ENCODE measurements at regions of chr1 and their contacts with region 1.

Region 1: GRCh38 chr1:109790735-109791494 is 27.2 kb upstream of the EPS8L3 start:
- DNase-seq: no peak
- ATAC-seq: peak; percentile 41

Region 2: DNA sequence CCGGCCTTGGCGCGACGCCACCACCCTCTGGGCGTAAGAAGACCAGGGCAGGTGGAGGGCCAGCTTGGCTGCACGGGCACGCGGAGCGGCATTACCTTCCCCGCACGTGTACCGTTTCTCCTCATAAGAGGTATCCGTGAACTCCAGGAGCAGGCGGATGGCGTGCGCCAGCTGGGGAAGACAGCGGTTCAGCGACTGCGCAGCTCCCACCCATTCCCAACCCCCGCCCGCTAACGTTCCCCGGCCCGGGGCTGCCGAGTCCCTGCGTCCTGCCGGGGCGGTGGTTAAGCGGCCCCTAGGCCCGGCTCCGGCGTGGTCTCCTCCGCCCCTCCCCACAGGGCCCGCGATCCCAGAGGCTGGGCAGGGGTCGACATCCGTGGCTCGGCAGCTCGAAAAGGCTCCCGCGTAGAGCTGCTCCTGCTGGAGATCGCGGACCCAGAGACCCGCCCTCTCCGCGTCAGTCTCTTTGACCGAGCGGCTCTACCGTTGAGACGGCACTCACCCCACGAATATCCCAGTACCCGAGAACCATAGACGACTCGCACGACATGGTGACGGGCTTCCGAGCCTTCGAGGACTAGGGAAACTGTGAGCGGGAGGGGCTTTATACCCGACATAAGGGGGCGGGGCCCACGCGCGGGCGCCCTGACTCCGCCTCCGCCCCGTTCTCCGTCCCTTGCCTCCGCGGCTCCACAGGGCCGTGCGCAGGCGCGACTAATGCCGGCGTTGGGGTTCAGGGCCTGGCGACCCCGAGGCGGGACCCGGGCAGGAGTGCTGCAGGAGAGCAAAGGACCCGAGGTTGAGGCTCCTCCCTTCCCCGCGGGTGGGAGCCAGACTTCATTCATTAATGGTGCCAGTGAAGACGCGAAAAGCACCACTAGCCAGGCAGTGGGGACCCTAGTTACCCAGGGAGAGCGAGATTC is 50.9 kb before region 1 on chr1:
- intact Hi-C with region 1: no loop called
- DNase-seq: peak; percentile 90
- ATAC-seq: peak; percentile 99

Region 3: GRCh38 chr1:109895720-109896504 is 105.0 kb after region 1 on chr1:
- intact Hi-C with region 1: loop called (anchors 1 kb)
- DNase-seq: no peak
- ATAC-seq: no peak

Measured in Right ventricle myocardium inferior (tissue), 1 donor.